CD4-positive, alpha-beta memory T cell (primary cell): ENCODE measurements at regions of chr15 and their contacts with region 1.

Region 1: DNA sequence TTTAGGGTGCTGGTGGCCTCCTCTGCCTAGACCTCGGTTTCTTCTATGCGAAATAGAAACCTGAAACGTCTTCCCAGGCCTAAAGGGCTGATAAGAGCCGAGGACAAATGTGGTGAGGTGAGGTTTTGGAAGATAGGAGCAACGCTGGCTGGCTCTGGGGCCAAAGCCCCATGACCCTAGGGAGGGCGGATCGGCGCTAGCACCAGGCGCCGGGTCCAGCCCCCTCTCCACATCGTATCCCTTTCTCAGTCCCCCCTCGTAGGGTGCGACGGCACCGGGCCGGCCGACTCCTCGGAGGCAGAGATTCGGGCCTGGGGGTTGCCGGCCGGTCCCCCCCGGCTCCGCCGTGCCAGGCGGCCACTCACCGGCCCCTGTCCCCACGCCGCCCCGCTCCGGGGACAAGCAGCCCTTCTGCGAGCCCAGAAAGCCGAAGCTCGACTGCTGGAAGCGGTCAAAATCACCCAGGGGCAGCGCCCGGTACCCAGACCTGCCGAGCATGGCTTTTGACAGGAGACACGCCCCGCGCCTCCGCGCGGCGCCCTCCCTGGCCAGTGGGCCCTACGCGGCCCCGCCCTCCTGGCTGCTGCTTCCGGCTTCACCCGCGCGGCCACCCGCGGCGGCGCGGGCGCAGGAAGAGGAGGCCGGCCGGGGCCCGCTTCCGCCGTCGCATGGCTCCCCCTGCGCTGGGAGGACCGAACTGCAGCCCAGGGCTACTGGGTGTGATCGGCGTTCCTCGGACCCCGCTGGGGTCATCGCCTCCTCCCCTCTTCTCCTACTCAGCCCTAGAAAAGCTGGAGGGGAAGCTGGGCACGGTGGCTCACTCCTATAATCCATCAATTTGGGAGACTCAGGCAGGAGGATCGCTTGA is at the start of gene STOML1:
- DNase-seq: peak; percentile 91 to 94 (median 91)
- H3K4me3 ChIP-seq: peak within 1 kb of the TSS; percentile 66 to 72
- H3K4me3 Mint-ChIP-seq: peak within 1 kb of the TSS; percentile 80 to 99 (median 84)
- H3K27ac ChIP-seq: peak within 1 kb of the TSS; percentile 67
- H3K27ac Mint-ChIP-seq: peak within 1 kb of the TSS; percentile 75 to 90 (median 86)
- H3K4me1 ChIP-seq: peaks cover 42% of the 10 kb centered on the region
- H3K4me1 Mint-ChIP-seq: peaks cover 26 to 59% (median 39%) of the 10 kb centered on the region in 4 donors
- H3K27me3 ChIP-seq: no peaks in the 10 kb centered on the region
- H3K27me3 Mint-ChIP-seq: no peaks in the 10 kb centered on the region
- total RNA-seq, gene STOML1: 10.8 to 11.1 TPM

Region 2: GRCh38 chr15:73950831-73951561 is 41.0 kb before region 1 on chr15:
- CTCF ChIA-PET with region 1: interaction called, 10 read pairs
- POLR2A ChIA-PET with region 1: no interaction called
- intact Hi-C with region 1: no loop called
- DNase-seq: peak; percentile 63 to 66 (median 64)
- H3K4me3 ChIP-seq: no peak overlapping the region
- H3K4me3 Mint-ChIP-seq: peak overlapping the region in 2 of 8 donors; percentile 39 to 59
- H3K27ac ChIP-seq: peak overlapping the region; percentile 5
- H3K27ac Mint-ChIP-seq: peak overlapping the region; percentile 19 to 97 (median 94)
- H3K4me1 ChIP-seq: peaks cover 5% of the 10 kb centered on the region
- H3K4me1 Mint-ChIP-seq: peaks cover 3 to 22% (median 6%) of the 10 kb centered on the region in 4 donors
- H3K27me3 ChIP-seq: no peaks in the 10 kb centered on the region
- H3K27me3 Mint-ChIP-seq: no peaks in the 10 kb centered on the region

Region 3: GRCh38 chr15:73964736-73965093 is 27.2 kb before region 1 on chr15:
- CTCF ChIA-PET with region 1: interaction called, 24 read pairs
- POLR2A ChIA-PET with region 1: interaction called, 8 read pairs
- intact Hi-C with region 1: loop called (anchors 2 kb)
- DNase-seq: peak; percentile 80 to 87 (median 83)
- H3K4me3 ChIP-seq: peak overlapping the region in 1 of 2 donors; percentile 64
- H3K4me3 Mint-ChIP-seq: peak overlapping the region; percentile 75 to 88 (median 84)
- H3K27ac ChIP-seq: peak overlapping the region; percentile 24
- H3K27ac Mint-ChIP-seq: peak overlapping the region; percentile 43 to 93 (median 77)
- H3K4me1 ChIP-seq: peaks cover 32% of the 10 kb centered on the region
- H3K4me1 Mint-ChIP-seq: peaks cover 24 to 41% (median 31%) of the 10 kb centered on the region in 4 donors
- H3K27me3 ChIP-seq: no peaks in the 10 kb centered on the region
- H3K27me3 Mint-ChIP-seq: no peaks in the 10 kb centered on the region

Region 4: DNA sequence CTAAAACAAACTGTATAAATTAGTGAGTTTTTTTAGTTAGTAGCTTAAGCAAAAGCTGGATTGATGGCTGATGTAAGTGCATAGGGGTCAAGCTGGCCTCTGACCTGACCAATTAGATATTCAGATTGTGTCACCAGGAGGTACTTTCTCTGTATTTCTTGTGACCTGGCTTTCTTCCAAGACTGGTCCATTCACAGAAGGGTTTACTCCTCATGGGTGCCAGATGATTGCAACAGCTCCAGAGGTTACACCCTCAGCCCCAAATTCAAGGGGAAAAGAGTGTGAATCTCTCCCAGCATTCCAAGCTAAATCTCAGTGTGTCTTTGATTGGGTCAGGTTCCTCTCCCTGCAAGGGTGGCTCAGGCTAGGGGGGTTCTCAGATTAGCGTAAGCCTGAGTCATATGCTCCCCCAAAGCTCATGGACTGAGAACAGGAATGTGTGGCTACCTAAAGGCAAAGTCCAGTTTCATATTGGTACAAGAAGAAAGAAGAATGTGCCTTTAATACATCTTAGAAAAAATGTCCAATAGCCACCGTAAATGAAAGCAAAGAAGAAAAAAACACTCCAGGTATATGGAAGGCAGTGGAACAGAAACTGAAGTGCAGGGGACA is 19.1 kb after region 1 on chr15:
- CTCF ChIA-PET with region 1: interaction called, 18 read pairs
- POLR2A ChIA-PET with region 1: interaction called, 17 read pairs
- intact Hi-C with region 1: no loop called
- DNase-seq: no peak
- H3K4me3 ChIP-seq: no peak overlapping the region
- H3K4me3 Mint-ChIP-seq: no peak overlapping the region
- H3K27ac ChIP-seq: no peak overlapping the region
- H3K27ac Mint-ChIP-seq: peak overlapping the region in 4 of 7 donors; percentile 38 to 70 (median 52)
- H3K4me1 ChIP-seq: peaks cover 72% of the 10 kb centered on the region
- H3K4me1 Mint-ChIP-seq: peaks cover 50 to 81% (median 68%) of the 10 kb centered on the region in 4 donors
- H3K27me3 ChIP-seq: no peaks in the 10 kb centered on the region
- H3K27me3 Mint-ChIP-seq: no peaks in the 10 kb centered on the region

Region 5: DNA sequence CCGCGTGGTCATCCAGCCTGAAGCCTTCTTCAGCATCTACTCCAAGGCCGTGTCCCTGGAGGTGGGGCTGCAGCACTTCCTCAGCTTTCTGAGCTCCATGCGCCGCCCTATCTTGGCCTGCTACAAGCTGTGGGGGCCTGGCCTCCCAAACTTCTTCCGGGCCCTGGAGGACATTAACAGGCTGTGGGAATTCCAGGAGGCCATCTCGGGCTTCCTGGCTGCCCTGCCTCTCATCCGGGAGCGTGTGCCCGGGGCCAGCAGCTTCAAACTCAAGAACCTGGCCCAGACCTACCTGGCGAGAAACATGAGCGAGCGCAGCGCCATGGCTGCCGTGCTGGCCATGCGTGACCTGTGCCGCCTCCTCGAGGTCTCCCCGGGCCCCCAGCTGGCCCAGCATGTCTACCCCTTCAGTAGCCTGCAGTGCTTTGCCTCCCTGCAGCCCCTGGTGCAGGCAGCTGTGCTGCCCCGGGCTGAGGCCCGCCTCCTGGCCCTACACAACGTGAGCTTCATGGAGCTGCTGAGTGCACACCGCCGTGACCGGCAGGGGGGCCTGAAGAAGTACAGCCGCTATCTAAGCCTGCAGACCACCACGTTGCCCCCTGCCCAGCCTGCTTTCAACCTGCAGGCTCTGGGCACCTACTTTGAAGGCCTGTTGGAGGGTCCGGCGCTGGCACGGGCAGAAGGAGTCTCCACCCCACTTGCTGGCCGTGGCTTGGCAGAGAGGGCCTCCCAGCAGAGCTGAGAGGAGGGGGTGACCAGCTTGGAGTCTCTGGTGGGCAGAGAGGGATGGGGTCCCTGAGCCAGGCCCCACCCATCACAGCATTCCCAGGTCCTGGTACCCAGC is 52.5 kb after region 1 on chr15:
- CTCF ChIA-PET with region 1: interaction called, 11 read pairs
- POLR2A ChIA-PET with region 1: interaction called, 6 read pairs
- intact Hi-C with region 1: loop called (anchors 5 kb)
- DNase-seq: no peak
- H3K4me3 ChIP-seq: no peak overlapping the region
- H3K4me3 Mint-ChIP-seq: no peak overlapping the region
- H3K27ac ChIP-seq: no peak overlapping the region
- H3K27ac Mint-ChIP-seq: peak overlapping the region in 1 of 7 donors; percentile 36
- H3K4me1 ChIP-seq: peaks cover 12% of the 10 kb centered on the region
- H3K4me1 Mint-ChIP-seq: peaks cover 5 to 17% (median 10%) of the 10 kb centered on the region in 4 donors
- H3K27me3 ChIP-seq: no peaks in the 10 kb centered on the region
- H3K27me3 Mint-ChIP-seq: no peaks in the 10 kb centered on the region

Region 6: DNA sequence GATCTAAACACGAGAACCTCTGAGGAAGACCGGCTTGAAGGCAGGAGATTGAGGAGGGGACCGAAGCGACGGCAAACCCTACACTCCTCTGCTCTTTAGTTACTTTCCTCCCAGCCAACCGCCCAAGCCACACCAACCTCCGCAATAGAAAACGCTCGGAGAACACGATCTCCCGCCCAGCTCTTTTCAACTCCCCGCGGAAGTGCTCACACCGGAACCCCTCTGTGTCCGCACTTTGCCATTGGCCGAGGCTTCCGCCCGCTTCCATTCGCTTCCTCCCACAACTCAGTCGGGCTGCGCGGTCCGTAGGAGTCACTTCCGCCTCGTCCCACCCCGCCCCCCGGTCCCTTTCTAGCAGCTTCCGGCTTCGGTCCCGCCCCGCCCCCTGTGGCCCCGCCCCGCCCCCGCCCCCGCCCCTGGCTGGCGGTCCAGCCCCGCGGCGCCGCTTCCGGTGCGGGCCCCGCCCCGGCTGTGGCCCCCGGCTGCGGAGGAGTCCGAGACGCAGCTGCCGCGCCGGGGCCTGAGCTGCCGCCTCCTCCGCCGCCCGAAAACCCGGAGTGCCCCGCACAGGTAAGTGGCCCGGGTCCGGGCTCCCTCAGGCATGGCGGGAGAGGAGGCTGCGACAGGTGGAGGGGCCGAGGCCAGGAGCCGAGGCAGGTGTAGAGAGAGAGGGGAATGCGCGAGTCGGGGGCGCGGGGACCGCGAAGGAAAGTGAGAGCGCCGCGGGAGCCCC is 549.0 kb after region 1 on chr15 and contains the start of gene ARID3B:
- CTCF ChIA-PET with region 1: no interaction called
- POLR2A ChIA-PET with region 1: interaction called, 3 read pairs
- intact Hi-C with region 1: loop called (anchors 10 kb)
- DNase-seq: peak; percentile 89 to 96 (median 93)
- H3K4me3 ChIP-seq: peak within 1 kb of the TSS; percentile 64 to 79
- H3K4me3 Mint-ChIP-seq: peak within 1 kb of the TSS; percentile 94 to 100 (median 98)
- H3K27ac ChIP-seq: peak within 1 kb of the TSS; percentile 77
- H3K27ac Mint-ChIP-seq: peak within 1 kb of the TSS; percentile 87 to 99 (median 95)
- H3K4me1 ChIP-seq: peaks cover 39% of the 10 kb centered on the region
- H3K4me1 Mint-ChIP-seq: peaks cover 37 to 62% (median 51%) of the 10 kb centered on the region in 4 donors
- H3K27me3 ChIP-seq: no peaks in the 10 kb centered on the region
- H3K27me3 Mint-ChIP-seq: no peaks in the 10 kb centered on the region
- total RNA-seq, gene ARID3B: 32.9 TPM